ENCODE measurements at regions of chr20 and their contacts with region 1.

Region 1: GRCh38 chr20:43749734-43750294 is 23.0 kb upstream of the GTSF1L start:
- DNase-seq: peak; percentile 53 to 100
- H3K4me3 ChIP-seq: no peak overlapping the region
- H3K27ac ChIP-seq: no peak overlapping the region
- H3K4me1 ChIP-seq: peaks cover 0 to 4% (median 1%) of the 10 kb centered on the region in 4 experiments; a peak in 2 of 7 replicates
- H3K27me3 ChIP-seq: no peaks in the 10 kb centered on the region
- CTCF ChIP-seq: peak; percentile 94 to 97 (median 95)
- EP300 ChIP-seq: no peak
- POLR2A ChIP-seq: no peak
- RAD21 ChIP-seq: peak; percentile 96 to 98

Region 2: DNA sequence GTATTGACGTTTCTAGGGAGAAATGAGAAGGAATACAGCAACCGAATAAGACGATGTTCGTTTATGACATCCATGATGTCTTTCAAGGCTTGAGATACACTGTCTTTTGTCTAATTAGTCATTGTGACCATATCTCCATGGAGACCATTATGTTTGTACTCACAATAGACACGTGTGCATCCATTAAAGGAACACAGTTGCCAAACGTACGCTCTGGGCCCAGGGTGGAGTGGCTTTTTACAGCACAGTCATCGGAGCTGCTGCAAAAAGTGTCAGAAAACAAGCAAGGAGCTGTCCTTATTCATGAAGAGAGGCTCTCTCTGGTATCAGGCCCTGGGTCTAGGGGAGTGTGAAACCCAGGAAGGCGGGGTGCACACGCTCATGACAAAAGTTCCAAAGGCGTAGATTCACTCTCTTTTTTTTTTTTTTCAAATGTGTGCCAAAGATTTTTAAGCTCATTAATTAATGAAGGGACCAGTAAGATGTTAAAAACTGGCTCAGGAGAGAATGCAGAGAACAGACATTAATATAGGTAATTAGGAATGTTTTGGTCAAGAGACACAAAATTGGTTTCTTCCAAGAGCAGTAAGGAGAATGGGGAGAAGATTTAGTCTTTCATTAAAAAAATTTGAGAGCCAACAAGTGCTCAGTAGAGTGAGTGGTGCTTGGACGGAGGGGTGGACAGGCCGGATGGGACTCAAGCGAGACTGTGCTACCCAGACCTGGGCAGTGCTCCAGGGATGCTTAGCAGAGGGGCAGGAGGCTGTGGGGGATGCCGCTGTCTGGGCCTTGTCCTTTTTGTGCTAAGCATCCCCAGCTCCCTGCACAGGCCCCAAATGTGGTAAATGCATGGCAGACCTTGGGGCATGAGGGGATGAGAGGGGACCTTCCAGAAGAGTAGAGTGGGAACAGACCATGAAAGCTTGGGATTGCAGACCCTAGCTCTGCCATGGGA is 11.8 kb after region 1 on chr20:
- CTCF ChIA-PET with region 1: interaction called, 11 read pairs
- POLR2A ChIA-PET with region 1: no interaction called
- DNase-seq: no peak
- H3K4me3 ChIP-seq: no peak overlapping the region
- H3K27ac ChIP-seq: no peak overlapping the region
- H3K4me1 ChIP-seq: no peaks in the 10 kb centered on the region; a peak in 1 of 7 replicates
- H3K27me3 ChIP-seq: no peaks in the 10 kb centered on the region
- CTCF ChIP-seq: no peak
- EP300 ChIP-seq: no peak
- POLR2A ChIP-seq: no peak
- RAD21 ChIP-seq: no peak

Region 3: DNA sequence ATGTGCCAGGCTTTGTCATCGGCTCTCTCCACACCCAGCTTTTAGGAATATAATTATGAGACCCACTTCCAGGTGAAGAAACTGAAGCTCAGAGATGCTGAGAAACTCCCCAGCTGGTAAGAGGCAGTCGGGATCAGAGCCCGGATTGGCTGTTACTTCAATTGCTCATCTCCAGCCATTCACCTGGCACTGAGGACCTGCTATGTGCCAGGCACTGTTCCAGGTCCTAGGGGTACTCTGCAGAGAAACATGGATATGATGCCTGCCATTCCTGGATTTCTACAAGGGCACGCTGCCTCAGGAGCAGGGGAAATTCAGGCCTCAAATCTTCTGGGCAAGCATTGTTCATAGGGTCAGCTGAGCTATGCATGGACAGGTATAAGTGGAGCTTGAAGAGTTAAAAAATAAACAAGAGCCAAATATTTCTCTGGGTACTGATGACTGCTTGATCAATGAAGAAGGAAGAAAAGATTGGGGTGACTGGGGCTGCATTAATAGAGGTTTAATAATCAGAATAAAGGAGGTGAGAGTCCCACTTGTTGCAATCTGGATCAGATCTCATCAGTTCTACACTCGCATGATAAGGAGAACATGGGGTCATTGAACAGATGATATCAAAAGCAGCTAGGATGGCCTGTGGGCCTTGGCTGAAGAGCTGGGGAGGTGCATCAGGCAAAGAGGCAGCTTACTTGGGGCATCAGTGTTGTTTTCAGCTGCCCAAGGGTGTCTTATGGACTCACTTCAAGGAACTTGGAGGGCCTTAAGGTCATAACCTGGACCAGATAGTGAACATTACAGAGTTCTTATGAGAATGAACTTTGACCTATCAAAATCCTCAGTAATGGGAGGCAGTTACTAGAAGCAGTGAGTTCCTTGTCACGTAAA is 83.9 kb after region 1 on chr20:
- CTCF ChIA-PET with region 1: interaction called, 18 read pairs
- POLR2A ChIA-PET with region 1: no interaction called
- DNase-seq: no peak
- H3K4me3 ChIP-seq: no peak overlapping the region
- H3K27ac ChIP-seq: no peak overlapping the region
- H3K4me1 ChIP-seq: no peaks in the 10 kb centered on the region
- H3K27me3 ChIP-seq: no peaks in the 10 kb centered on the region
- CTCF ChIP-seq: no peak
- EP300 ChIP-seq: no peak
- POLR2A ChIP-seq: no peak
- RAD21 ChIP-seq: no peak